GM12878 (cell line): ENCODE measurements at regions of chr6 and their contacts with region 1.

Region 1: DNA sequence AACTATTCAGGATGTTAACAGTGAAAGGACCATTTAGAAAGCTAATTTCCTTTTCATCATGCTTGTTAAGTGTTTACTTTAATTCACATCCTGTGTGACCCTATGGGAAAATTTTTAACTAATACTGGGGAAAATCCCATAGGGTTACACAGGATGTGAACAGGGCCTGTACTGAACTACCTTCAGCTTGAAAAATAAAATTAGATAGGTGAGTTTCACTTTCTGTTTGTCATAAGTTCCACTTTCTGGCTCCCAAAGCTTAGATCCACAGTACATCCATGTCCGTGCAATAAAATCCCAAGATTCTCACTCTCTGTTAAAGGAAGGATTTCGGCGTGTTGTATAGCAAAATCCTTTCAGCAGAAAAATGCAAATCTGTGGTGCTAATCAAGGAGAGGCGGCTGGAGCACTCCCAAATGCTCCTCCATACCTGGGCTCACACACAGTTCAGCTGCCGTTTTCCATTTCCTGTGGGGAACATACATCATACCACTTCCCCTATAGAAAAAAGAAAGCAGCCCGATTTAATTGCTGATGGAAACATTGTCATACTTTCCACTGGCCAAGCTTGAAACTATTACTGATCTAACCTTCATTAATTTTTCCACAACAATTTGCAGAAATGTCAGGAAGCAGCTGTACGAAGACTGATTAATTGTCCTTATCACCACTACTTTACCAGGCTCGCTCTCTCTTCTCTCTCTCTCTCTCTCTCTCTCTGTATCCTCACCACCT is 125.2 kb downstream of the HIVEP2 start:
- DNase-seq: peak; percentile 90
- ATAC-seq: peak; percentile 67
- H3K4me3 ChIP-seq: peak overlapping the region; percentile 39; the same call in 1 of the 2 replicates
- H3K27ac ChIP-seq: peak overlapping the region; percentile 88
- H3K4me1 ChIP-seq: peaks cover 40% of the 10 kb centered on the region
- H3K27me3 ChIP-seq: no peaks in the 10 kb centered on the region
- CTCF ChIP-seq: no peak
- EP300 ChIP-seq: peak; percentile 51 to 97
- POLR2A ChIP-seq: no peak
- RAD21 ChIP-seq: 0 out of 2 replicates have a peak, but pooled peaks have one; percentile 4

Region 2: DNA sequence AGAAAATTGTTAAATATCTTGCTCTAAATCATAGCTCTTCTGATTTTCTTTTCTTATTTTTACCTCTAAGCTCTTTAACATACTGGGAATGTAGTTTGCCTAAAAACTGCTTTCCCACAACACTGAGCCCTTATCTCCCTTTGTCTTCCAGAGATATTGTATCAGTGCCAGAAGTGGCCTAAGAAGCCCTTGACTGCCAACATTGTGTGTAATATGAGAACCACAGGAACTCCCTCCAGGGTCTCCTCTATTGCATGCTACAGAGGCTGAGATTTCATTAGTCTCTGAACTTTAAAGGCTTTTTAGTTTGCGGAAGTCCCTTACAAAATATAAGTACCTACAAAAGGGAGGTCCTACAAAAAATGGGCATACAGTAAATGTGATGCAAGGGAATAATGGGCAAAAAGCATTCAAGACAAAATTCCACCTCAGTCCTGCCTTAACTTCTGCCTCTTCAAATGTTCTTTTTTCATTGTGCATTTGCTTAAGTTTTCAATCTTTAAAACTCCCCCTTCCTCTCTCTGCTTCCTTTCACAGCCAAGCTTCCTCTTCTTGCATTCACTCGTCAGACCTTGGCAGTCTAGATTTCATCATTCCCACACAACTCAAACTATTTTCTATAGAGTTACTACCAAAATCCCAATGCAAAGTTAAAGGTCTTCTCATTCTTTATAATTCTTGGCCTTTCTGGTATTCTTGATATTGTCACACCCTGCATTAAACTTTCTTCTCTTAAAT is 441.5 kb before region 1 on chr6:
- CTCF ChIA-PET with region 1: no interaction called
- POLR2A ChIA-PET with region 1: no interaction called
- RAD21 ChIA-PET with region 1: no interaction called
- SMC1A ChIA-PET with region 1: no interaction called
- in situ Hi-C with region 1: no loop called
- intact Hi-C with region 1: no loop called
- DNase-seq: no peak
- ATAC-seq: no peak
- H3K4me3 ChIP-seq: no peak overlapping the region
- H3K27ac ChIP-seq: no peak overlapping the region
- H3K4me1 ChIP-seq: no peaks in the 10 kb centered on the region
- H3K27me3 ChIP-seq: no peaks in the 10 kb centered on the region
- CTCF ChIP-seq: no peak
- EP300 ChIP-seq: no peak
- POLR2A ChIP-seq: no peak
- RAD21 ChIP-seq: no peak

Region 3: GRCh38 chr6:142784344-142784743 is 35.4 kb before region 1 on chr6:
- CTCF ChIA-PET with region 1: interaction called, 9 read pairs
- POLR2A ChIA-PET with region 1: interaction called, 6 read pairs
- RAD21 ChIA-PET with region 1: interaction called, 33 read pairs
- SMC1A ChIA-PET with region 1: interaction called, 39 read pairs
- in situ Hi-C with region 1: no loop called
- intact Hi-C with region 1: loop called (anchors 2 kb)
- DNase-seq: peak; percentile 86
- ATAC-seq: peak; percentile 99
- H3K4me3 ChIP-seq: no peak overlapping the region
- H3K27ac ChIP-seq: peak overlapping the region; percentile 76
- H3K4me1 ChIP-seq: peaks cover 11% of the 10 kb centered on the region; the same call in 1 of the 2 replicates
- H3K27me3 ChIP-seq: no peaks in the 10 kb centered on the region
- CTCF ChIP-seq: no peak
- EP300 ChIP-seq: peak; percentile 86 to 97
- POLR2A ChIP-seq: no peak
- RAD21 ChIP-seq: peak; percentile 43; the same call in 1 of the 2 replicates

Region 4: GRCh38 chr6:142802124-142802523 is 17.6 kb before region 1 on chr6:
- CTCF ChIA-PET with region 1: interaction called, 31 read pairs
- POLR2A ChIA-PET with region 1: interaction called, 34 read pairs
- RAD21 ChIA-PET with region 1: interaction called, 209 read pairs
- SMC1A ChIA-PET with region 1: interaction called, 115 read pairs
- in situ Hi-C with region 1: no loop called
- intact Hi-C with region 1: no loop called
- DNase-seq: no peak
- ATAC-seq: peak; percentile 44
- H3K4me3 ChIP-seq: no peak overlapping the region
- H3K27ac ChIP-seq: no peak overlapping the region
- H3K4me1 ChIP-seq: peaks cover 27% of the 10 kb centered on the region
- H3K27me3 ChIP-seq: no peaks in the 10 kb centered on the region
- CTCF ChIP-seq: no peak
- EP300 ChIP-seq: no peak
- POLR2A ChIP-seq: no peak
- RAD21 ChIP-seq: no peak

Region 5: DNA sequence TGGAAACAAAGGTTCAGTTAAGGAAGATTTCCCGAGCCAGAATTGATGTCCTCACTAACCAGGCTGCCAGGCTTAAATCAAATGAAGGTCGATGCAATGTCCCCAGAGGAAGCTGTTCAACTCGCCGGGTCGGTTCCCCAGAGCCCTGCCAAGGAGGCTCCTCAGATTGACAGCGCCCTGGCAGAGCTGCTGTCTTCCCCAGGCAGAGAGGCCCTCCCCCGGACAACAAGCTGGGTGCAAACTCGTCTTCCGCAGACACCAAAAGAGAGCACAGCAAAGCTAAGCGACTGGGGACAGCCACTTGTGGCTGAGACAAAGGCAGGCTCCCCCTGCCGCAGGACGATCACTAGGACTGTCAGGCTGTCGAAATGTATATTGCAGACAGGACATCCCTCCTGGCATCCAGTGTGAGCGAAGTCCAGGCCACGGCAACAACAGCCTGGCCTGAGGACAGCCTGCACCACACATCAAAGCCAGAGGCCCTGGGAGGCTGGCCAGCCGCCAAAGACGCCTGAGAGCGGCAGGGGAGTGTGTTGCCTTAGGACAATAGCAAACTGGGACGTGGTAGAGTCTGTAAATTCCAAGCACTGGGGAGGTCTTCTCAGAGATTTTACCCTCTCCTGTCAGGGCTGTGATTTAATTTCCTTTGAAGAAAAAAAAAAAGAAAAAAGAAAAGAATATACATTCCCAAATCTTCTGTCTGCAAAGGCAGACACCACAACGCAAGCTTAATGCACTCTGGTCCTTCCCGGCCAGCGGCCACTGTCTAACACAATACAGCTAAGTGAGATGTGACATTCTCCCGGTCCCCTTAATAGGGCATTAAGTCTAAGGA is 26.1 kb after region 1 on chr6:
- CTCF ChIA-PET with region 1: interaction called, 20 read pairs
- POLR2A ChIA-PET with region 1: interaction called, 67 read pairs
- RAD21 ChIA-PET with region 1: interaction called, 374 read pairs
- SMC1A ChIA-PET with region 1: interaction called, 449 read pairs
- in situ Hi-C with region 1: no loop called
- intact Hi-C with region 1: loop called (anchors 1 kb)
- DNase-seq: no peak
- ATAC-seq: peak; percentile 23
- H3K4me3 ChIP-seq: peak overlapping the region; percentile 48; the same call in 1 of the 2 replicates
- H3K27ac ChIP-seq: peak overlapping the region; percentile 98
- H3K4me1 ChIP-seq: peaks cover 81% of the 10 kb centered on the region
- H3K27me3 ChIP-seq: no peaks in the 10 kb centered on the region
- CTCF ChIP-seq: no peak
- EP300 ChIP-seq: no peak
- POLR2A ChIP-seq: peak; percentile 67
- RAD21 ChIP-seq: no peak

Region 6: DNA sequence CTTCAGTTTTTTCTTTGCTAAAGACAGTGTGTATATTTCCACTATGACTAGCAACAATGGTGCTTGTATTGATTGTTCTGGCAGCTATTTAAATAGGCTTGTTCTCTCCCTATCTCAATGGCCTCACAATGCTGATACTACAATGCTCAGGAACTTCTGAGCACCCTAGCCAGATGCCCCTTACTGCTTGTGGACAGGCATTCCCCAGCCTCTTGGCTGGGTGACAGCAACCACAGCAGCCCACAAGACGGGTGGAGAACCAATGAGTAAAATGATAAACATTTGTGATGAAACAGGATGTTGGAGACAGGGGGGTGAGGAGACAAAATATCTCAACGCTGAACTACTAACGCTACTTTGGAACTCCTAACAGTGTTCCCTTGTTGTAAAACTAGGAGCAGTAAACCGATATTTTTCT is 82.9 kb after region 1 on chr6:
- CTCF ChIA-PET with region 1: no interaction called
- POLR2A ChIA-PET with region 1: interaction called, 4 read pairs
- RAD21 ChIA-PET with region 1: interaction called, 14 read pairs
- SMC1A ChIA-PET with region 1: interaction called, 5 read pairs
- in situ Hi-C with region 1: no loop called
- intact Hi-C with region 1: no loop called
- DNase-seq: peak; percentile 67
- ATAC-seq: peak; percentile 79
- H3K4me3 ChIP-seq: no peak overlapping the region
- H3K27ac ChIP-seq: peak overlapping the region; percentile 63
- H3K4me1 ChIP-seq: peaks cover 16% of the 10 kb centered on the region; the same call in 1 of the 2 replicates
- H3K27me3 ChIP-seq: no peaks in the 10 kb centered on the region
- CTCF ChIP-seq: no peak
- EP300 ChIP-seq: peak; percentile 53 to 65; a peak in 2 of 4 replicates
- POLR2A ChIP-seq: no peak
- RAD21 ChIP-seq: no peak

Region 7: DNA sequence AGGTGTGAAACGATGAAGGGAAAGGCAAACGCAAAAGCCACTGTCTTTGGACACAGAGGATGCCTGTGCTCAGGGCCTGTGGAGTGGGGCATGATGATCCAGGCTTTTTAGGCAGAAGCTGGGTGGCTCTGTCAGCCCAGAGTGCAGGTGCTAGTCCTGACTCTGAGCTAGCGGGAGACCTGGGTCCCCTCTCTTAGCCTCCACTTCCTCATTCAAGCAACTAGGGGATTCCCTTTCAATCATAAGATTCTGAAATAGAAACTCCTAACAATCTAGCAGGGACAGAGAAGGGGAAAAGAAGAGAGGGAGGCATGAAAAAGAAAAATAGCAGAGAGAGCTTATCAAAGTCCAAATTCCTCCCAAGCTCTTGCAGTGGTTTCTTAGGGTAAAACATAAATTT is 132.8 kb after region 1 on chr6:
- CTCF ChIA-PET with region 1: interaction called, 5 read pairs
- POLR2A ChIA-PET with region 1: interaction called, 10 read pairs
- RAD21 ChIA-PET with region 1: interaction called, 6 read pairs
- SMC1A ChIA-PET with region 1: interaction called, 6 read pairs
- in situ Hi-C with region 1: no loop called
- intact Hi-C with region 1: no loop called
- DNase-seq: no peak
- ATAC-seq: peak; percentile 86
- H3K4me3 ChIP-seq: no peak overlapping the region
- H3K27ac ChIP-seq: no peak overlapping the region; the same call in 1 of the 2 replicates
- H3K4me1 ChIP-seq: peaks cover 21% of the 10 kb centered on the region
- H3K27me3 ChIP-seq: no peaks in the 10 kb centered on the region
- CTCF ChIP-seq: 0 out of 6 replicates have a peak, but pooled peaks of 1 of the 3 experiments have one; percentile 7
- EP300 ChIP-seq: peak; percentile 14 to 63; a peak in 1 of 4 replicates
- POLR2A ChIP-seq: no peak
- RAD21 ChIP-seq: peak; percentile 34; the same call in 1 of the 2 replicates